CD14-positive monocyte (primary cell): ENCODE measurements at regions of chr19 and their contacts with region 1.

Region 1: DNA sequence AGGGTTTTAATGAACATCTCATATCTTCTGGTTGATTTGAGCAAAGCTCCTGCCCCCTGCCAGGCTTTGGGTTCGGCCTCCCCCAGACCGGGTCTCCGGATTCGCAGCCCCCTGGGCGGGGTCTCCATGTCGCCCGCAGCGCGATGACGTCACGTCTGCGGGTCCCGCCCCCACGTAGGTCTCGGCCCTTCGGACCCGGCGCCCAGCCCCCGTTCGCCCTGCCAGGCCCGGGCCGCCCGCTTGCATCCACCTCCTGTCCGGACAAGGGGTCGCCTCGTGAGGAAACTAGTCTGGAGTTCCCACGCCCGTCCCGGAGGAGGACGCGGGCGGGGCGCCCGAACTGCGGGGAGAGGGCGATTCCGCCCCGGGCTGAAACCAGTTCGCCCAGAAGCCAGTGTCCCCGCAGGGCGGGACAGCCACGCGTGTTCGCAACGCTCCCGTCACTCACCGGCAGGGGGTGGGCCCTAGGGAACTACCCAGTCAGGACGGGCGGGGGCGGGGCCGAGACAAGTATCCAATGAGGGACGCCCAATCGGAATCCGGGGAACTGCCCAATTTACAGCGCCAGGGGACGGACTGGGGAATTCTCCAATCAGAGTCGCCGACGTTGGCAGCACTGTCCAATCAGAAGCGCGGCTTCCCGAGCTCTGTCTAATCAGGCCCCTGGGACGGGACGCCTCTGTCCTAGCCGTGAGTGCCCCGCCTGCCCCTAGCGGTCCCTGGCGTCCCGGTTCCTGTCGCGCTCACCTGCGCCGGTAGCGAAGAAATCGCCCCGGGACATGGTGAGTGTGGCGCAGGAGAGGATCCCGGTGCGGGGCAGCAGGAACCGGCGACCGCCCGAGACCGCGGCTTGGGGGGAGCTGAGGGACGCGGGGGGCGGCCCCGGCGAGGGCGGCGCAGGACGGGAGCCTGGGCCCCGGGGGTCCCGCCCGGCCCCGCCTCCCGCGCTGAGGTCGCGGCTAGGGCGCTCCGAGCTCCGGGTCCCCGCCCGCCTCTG is at the start of gene ZNF555:
- DNase-seq: peak; percentile 98 to 100 (median 99)
- H3K4me3 ChIP-seq: peak within 1 kb of the TSS; percentile 64 to 87 (median 68)
- H3K4me3 Mint-ChIP-seq: peak within 1 kb of the TSS; percentile 89 to 91
- H3K27ac ChIP-seq: peak within 1 kb of the TSS; percentile 76 to 87
- H3K27ac Mint-ChIP-seq: peak within 1 kb of the TSS; percentile 72 to 93 (median 89)
- H3K4me1 ChIP-seq: peaks cover 20 to 23% of the 10 kb centered on the region in 2 donors
- H3K4me1 Mint-ChIP-seq: peaks cover 22% of the 10 kb centered on the region
- H3K27me3 ChIP-seq: no peaks in the 10 kb centered on the region
- H3K27me3 Mint-ChIP-seq: peaks cover 0 to 4% (median 3%) of the 10 kb centered on the region in 3 donors
- CTCF ChIP-seq: peak; percentile 74
- polyA plus RNA-seq, gene ZNF555: 2.2 to 2.9 (median 2.6) TPM

Region 2: DNA sequence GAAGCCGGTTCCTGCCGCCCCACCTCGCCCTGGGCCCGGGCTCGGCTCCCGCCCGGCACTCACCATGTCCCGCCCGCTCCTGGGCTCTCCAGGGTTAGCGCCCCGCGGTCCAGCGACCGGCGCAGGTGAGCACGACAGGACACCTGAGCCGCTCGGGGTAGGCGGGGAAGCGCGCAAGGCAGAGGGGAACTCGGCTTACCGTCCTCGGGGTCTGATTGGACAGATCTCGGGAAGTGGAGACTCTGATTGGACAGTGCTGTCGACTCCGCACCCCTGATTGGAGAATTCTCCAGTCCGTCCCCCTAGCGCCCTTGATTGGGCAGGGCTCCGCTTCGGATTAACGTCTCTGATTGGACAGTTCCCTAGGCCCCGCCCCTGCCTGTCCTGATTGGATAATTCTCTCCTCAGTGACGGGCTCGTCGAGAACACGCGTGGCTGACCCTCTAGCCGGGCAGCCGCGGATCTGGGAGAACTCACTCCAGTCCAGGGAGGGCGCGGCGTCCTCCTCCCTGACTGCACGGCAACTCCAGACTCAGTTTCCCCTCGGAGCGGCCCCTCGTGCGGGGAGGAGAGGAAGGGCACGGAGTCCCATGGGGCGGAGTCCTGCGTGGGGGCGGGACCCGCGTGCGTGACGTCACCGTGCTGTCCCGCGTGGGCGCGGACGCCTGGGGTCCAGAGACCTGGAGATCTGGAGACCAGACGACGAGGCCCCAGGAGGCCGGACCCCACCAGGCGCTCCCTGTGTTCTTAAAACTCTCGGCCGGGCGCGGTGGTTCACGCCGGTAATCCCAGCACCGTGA is 103.9 kb after region 1 on chr19 and contains the start of gene ZNF77:
- intact Hi-C with region 1: loop called in 1 of 2 experiments (anchors 5 kb)
- DNase-seq: peak; percentile 98 to 100 (median 98)
- H3K4me3 ChIP-seq: peak within 1 kb of the TSS; percentile 73 to 86 (median 76)
- H3K4me3 Mint-ChIP-seq: peak within 1 kb of the TSS; percentile 85 to 94
- H3K27ac ChIP-seq: peak within 1 kb of the TSS; percentile 82 to 91
- H3K27ac Mint-ChIP-seq: peak within 1 kb of the TSS; percentile 95 to 99 (median 97)
- H3K4me1 ChIP-seq: peaks cover 24 to 29% of the 10 kb centered on the region in 2 donors
- H3K4me1 Mint-ChIP-seq: peaks cover 25% of the 10 kb centered on the region
- H3K27me3 ChIP-seq: no peaks in the 10 kb centered on the region
- H3K27me3 Mint-ChIP-seq: peaks cover 0 to 11% (median 0%) of the 10 kb centered on the region in 3 donors
- CTCF ChIP-seq: no peak
- polyA plus RNA-seq, gene ZNF77: 0.30 to 2.7 (median 1.0) TPM

Region 3: DNA sequence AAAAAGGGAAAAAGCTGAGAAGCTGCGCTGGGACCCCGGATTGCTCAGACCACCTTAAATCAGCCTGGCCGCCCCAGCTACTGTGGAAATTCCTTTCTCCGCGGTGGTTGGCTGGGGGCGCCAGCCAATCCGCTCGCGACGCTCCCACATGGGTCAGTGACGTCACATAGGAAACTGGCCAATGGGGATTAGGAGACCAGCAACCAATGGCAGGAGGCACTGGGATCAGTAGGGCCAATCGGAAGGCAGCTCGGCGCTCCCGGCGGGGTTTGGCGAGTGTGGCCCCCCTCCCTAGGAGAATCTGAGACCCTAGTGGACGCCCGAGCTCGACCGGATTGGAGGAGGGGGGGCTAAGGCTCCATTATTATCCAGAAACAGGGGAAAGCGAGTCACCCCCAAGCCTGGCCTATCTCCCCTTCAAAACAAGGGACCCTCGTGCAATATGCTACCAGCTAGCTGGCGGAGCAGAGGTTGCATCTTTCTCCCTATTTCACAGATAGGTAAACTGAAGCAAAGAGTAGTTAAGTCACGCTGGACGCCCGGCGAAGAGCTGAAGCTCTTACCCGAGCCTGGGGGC is 194.5 kb after region 1 on chr19:
- intact Hi-C with region 1: loop called in 1 of 2 experiments (anchors 5 kb)
- DNase-seq: peak; percentile 97 to 99 (median 97)
- H3K4me3 ChIP-seq: peak overlapping the region; percentile 53 to 80 (median 63)
- H3K4me3 Mint-ChIP-seq: peak overlapping the region; percentile 88 to 95
- H3K27ac ChIP-seq: peak overlapping the region; percentile 83
- H3K27ac Mint-ChIP-seq: peak overlapping the region; percentile 92 to 98 (median 95)
- H3K4me1 ChIP-seq: peaks cover 18 to 25% of the 10 kb centered on the region in 2 donors
- H3K4me1 Mint-ChIP-seq: peaks cover 15% of the 10 kb centered on the region
- H3K27me3 ChIP-seq: peaks cover 3 to 34% of the 10 kb centered on the region in 2 donors
- H3K27me3 Mint-ChIP-seq: peaks cover 35 to 60% (median 56%) of the 10 kb centered on the region in 3 donors
- CTCF ChIP-seq: no peak

Region 4: DNA sequence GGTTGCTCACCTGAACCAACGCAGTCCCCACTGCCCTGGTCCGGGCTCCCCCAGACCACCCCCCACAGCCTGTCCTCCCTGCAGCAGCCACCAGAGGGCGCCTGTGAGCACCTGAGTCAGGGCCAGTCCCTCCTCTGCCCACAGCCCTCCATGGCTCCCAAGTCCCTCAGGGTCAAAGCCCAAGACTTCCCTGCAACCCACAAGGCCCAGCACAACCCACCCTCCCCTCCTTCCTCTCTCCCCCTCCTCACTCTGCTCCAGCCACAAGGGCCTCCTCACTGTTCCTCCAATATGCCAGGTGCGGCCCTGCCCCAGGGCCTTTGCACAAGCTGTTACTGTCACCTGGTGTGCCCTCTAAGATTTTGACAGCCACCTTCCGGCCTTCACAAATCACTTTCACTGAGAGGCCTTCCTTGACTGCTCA is 305.6 kb after region 1 on chr19:
- intact Hi-C with region 1: no loop called
- DNase-seq: peak; percentile 46 to 67 (median 48)
- H3K4me3 ChIP-seq: no peak overlapping the region
- H3K4me3 Mint-ChIP-seq: peak overlapping the region in 1 of 2 donors; percentile 39
- H3K27ac ChIP-seq: peak overlapping the region; percentile 67 to 84
- H3K27ac Mint-ChIP-seq: peak overlapping the region; percentile 46 to 95 (median 86)
- H3K4me1 ChIP-seq: peaks cover 42 to 46% of the 10 kb centered on the region in 2 donors
- H3K4me1 Mint-ChIP-seq: peaks cover 35% of the 10 kb centered on the region
- H3K27me3 ChIP-seq: no peaks in the 10 kb centered on the region
- H3K27me3 Mint-ChIP-seq: peaks cover 0 to 4% (median 0%) of the 10 kb centered on the region in 3 donors
- CTCF ChIP-seq: peak; percentile 99

Region 5: DNA sequence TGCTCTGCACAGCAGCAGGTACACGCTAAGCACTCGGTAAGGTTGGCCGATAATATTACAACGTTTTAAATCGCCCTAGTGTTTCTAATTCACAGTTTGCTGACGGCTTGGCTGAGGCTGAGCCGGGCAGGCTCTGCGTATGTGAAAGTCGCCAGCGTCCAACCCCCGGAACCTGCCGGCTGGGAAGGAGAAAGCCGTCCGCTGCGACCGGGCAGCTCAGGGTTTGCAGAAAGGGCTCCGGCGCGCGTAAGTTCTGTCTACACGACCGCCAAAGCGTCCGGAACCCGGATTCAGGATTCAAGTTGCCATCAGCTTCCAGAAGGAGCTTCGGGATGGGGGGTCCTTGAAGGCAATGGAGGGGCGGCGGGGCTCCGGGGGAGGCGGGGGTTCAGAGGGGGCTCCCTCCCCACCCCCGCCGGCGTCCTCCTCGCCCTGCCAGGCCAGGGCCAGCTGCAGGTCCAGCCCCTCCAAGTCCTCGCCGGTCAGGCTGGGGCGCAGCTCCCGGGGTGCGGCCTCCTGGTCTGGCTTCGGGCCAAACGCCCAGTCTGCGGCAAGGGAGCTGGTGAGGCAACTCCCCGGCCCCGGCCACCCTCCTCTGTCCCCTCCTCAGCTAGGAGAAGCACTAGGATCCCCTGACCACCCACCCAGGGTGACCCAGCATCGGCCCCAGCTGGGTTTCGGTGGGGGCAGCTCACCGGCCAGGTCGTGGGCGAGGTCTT is 641.6 kb after region 1 on chr19:
- intact Hi-C with region 1: no loop called
- DNase-seq: no peak
- H3K4me3 ChIP-seq: no peak overlapping the region
- H3K4me3 Mint-ChIP-seq: no peak overlapping the region
- H3K27ac ChIP-seq: no peak overlapping the region
- H3K27ac Mint-ChIP-seq: no peak overlapping the region
- H3K4me1 ChIP-seq: peaks cover 9 to 18% of the 10 kb centered on the region in 2 donors
- H3K4me1 Mint-ChIP-seq: peaks cover 15% of the 10 kb centered on the region
- H3K27me3 ChIP-seq: no peaks in the 10 kb centered on the region
- H3K27me3 Mint-ChIP-seq: peaks cover 2 to 14% (median 13%) of the 10 kb centered on the region in 3 donors
- CTCF ChIP-seq: no peak